ENCODE measurements at regions of chr10 and their contacts with region 1.

Region 1: GRCh38 chr10:73879296-73880173 is 5.2 kb upstream of the CAMK2G start:
- DNase-seq: peak; percentile 85
- CTCF ChIP-seq: peak; percentile 87

Region 2: GRCh38 chr10:73785221-73785720 is 94.3 kb before region 1 on chr10 and contains the start of gene ZSWIM8:
- CTCF ChIA-PET with region 1: interaction called, 12 read pairs
- POLR2A ChIA-PET with region 1: no interaction called
- DNase-seq: peak; percentile 91
- CTCF ChIP-seq: no peak

Region 3: DNA sequence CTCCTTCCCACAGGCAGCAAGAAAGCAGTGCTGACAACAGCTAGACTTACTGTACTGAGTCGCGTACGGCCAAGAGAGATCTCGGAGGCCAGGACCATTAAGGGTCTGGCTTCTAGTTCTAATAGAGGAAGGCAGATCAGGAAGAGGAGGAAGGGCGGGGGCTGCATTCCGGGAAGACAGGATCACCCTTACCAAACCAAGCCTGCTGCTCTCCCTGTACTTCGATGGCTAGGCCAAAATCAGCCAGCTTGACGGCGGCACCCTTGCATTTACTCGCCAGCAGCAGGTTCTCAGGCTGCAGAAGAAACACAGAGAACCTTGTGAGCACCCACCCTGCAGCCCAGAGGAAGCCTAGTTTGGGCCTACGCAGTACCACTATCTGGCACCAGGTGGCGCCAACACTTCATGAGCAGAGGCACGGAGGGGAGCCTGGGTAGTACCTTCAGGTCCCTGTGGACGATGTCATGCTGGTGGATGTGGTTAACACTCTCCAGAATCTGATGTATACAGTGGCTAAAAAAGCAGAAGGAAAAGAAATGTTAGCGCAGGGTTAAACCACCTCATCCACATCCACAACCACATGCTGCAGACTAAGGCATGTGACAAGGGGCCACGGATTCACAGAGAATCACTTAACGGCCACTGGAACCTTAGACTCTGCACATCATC is 30.6 kb before region 1 on chr10:
- CTCF ChIA-PET with region 1: interaction called, 383 read pairs
- POLR2A ChIA-PET with region 1: interaction called, 3 read pairs
- DNase-seq: peak; percentile 93
- CTCF ChIP-seq: peak; percentile 99

Region 4: GRCh38 chr10:73899423-73899822 is 19.9 kb after region 1 on chr10:
- CTCF ChIA-PET with region 1: interaction called, 84 read pairs
- POLR2A ChIA-PET with region 1: no interaction called
- DNase-seq: no peak
- CTCF ChIP-seq: no peak

Region 5: DNA sequence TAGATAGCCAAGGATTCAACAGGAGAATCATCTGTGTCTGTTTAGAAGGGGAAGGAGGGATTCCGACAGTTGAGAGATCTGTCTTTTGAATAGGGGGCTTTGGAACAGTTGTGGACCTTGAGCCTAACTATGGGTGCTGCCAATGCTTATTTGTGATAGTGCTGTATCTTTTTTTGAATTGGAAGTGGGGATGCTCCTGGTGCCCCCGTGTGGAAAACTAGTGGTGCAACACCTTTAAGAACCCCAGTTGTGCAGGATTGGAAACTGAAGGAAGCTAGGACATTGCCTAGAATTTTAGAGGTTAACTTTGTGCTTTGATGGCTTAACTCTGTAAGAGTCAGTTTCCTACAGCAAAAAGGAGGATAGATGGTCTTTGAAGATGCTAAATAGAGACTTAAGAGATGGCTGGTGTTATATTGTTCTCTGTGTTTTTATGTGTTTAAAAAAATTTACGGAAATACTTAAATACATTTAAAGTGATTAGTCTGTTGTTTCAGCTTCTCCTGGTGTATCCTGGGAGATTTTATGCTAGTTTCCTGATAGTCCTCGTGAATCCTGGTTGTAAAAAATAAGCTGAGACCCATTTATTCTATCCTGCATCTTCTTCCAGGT is 201.8 kb after region 1 on chr10:
- CTCF ChIA-PET with region 1: interaction called, 19 read pairs
- POLR2A ChIA-PET with region 1: no interaction called
- DNase-seq: peak; percentile 37
- CTCF ChIP-seq: peak; percentile 64